ENCODE measurements at regions of chr17 and their contacts with region 1.

Region 1: DNA sequence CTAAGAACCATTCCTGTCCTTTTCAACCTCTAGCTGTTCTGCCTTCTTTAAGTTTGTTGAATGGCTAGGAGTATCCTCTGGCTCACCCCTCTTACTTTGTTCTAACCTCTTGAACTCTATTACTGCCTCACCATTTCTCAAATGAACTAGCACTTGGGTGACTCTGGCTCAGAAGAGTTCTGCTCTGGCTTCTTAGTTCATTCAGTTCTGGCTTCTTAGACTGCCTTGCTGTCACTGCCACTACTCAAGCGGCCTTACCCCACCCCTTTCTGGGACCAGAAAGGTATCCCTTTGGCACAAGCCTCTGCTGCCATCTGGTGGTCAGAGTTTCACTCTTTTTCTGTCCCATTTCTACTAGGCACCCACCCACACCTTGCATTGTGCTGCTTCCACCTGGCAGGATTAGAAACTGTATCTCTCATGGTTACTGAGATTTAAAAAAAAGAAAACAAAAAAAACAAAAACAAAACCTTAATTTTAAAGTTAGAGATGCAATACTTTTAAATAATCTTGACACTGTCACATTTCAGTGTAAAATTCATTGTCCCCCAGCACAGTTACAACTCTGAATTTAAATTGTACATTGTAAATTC is 6.8 kb upstream of the ABCA10 start:
- DNase-seq: peak; percentile 38
- H3K4me3 ChIP-seq: no peak overlapping the region
- H3K27ac ChIP-seq: no peak overlapping the region
- H3K4me1 ChIP-seq: no peaks in the 10 kb centered on the region
- H3K27me3 ChIP-seq: no peaks in the 10 kb centered on the region
- CTCF ChIP-seq: peak; percentile 53 to 69 (median 66)
- POLR2A ChIP-seq: no peak

Region 2: GRCh38 chr17:68777243-68777855 is 458.1 kb before region 1 on chr17:
- intact Hi-C with region 1: loop called (anchors 5 kb)
- DNase-seq: peak; percentile 32
- H3K4me3 ChIP-seq: no peak overlapping the region
- H3K27ac ChIP-seq: no peak overlapping the region
- H3K4me1 ChIP-seq: no peaks in the 10 kb centered on the region
- H3K27me3 ChIP-seq: no peaks in the 10 kb centered on the region
- CTCF ChIP-seq: peak in 3 of 4 experiments; percentile 68 to 72 (median 70)
- POLR2A ChIP-seq: no peak

Region 3: GRCh38 chr17:68910251-68910705 is 325.2 kb before region 1 on chr17:
- intact Hi-C with region 1: loop called (anchors 10 kb)
- DNase-seq: no peak
- H3K4me3 ChIP-seq: no peak overlapping the region
- H3K27ac ChIP-seq: no peak overlapping the region
- H3K4me1 ChIP-seq: no peaks in the 10 kb centered on the region
- H3K27me3 ChIP-seq: no peaks in the 10 kb centered on the region
- CTCF ChIP-seq: no peak
- POLR2A ChIP-seq: no peak

Region 4: GRCh38 chr17:69287168-69287567 is 51.7 kb after region 1 on chr17:
- intact Hi-C with region 1: no loop called
- DNase-seq: no peak
- H3K4me3 ChIP-seq: no peak overlapping the region
- H3K27ac ChIP-seq: no peak overlapping the region
- H3K4me1 ChIP-seq: no peaks in the 10 kb centered on the region
- H3K27me3 ChIP-seq: no peaks in the 10 kb centered on the region
- CTCF ChIP-seq: no peak
- POLR2A ChIP-seq: no peak

Measured in prostate gland (tissue), 2 donors.